CD4-positive, alpha-beta memory T cell (primary cell): ENCODE measurements at regions of chr3 and their contacts with region 1.

Region 1: GRCh38 chr3:185937689-185938463 is at the start of gene TRA2B:
- DNase-seq: peak; percentile 97 to 99 (median 99)
- H3K4me3 ChIP-seq: peak within 1 kb of the TSS; percentile 98
- H3K4me3 Mint-ChIP-seq: peak within 1 kb of the TSS; percentile 98 to 100 (median 100)
- H3K27ac ChIP-seq: peak within 1 kb of the TSS; percentile 99
- H3K27ac Mint-ChIP-seq: peak within 1 kb of the TSS; percentile 100
- H3K4me1 ChIP-seq: peaks cover 32% of the 10 kb centered on the region
- H3K4me1 Mint-ChIP-seq: peaks cover 26 to 62% (median 35%) of the 10 kb centered on the region in 4 donors
- H3K27me3 ChIP-seq: no peaks in the 10 kb centered on the region
- H3K27me3 Mint-ChIP-seq: no peaks in the 10 kb centered on the region
- total RNA-seq, gene TRA2B: 179 to 181 TPM

Region 2: GRCh38 chr3:185585859-185586685 is 351.8 kb before region 1 on chr3 and contains the start of gene SENP2:
- CTCF ChIA-PET with region 1: no interaction called
- POLR2A ChIA-PET with region 1: interaction called, 13 read pairs
- intact Hi-C with region 1: loop called (anchors 5 kb)
- DNase-seq: peak; percentile 99 to 100 (median 100)
- H3K4me3 ChIP-seq: peak within 1 kb of the TSS; percentile 57 to 78
- H3K4me3 Mint-ChIP-seq: peak within 1 kb of the TSS; percentile 83 to 94 (median 90)
- H3K27ac ChIP-seq: peak within 1 kb of the TSS; percentile 95
- H3K27ac Mint-ChIP-seq: peak within 1 kb of the TSS; percentile 93 to 98 (median 96)
- H3K4me1 ChIP-seq: peaks cover 27% of the 10 kb centered on the region
- H3K4me1 Mint-ChIP-seq: peaks cover 18 to 32% (median 24%) of the 10 kb centered on the region in 4 donors
- H3K27me3 ChIP-seq: no peaks in the 10 kb centered on the region
- H3K27me3 Mint-ChIP-seq: no peaks in the 10 kb centered on the region
- total RNA-seq, gene SENP2: 46.0 to 54.3 TPM

Region 3: GRCh38 chr3:185912929-185913901 is 24.7 kb before region 1 on chr3:
- CTCF ChIA-PET with region 1: interaction called, 22 read pairs
- POLR2A ChIA-PET with region 1: interaction called, 35 read pairs
- intact Hi-C with region 1: loop called (anchors 2 kb)
- DNase-seq: no peak
- H3K4me3 ChIP-seq: no peak overlapping the region
- H3K4me3 Mint-ChIP-seq: no peak overlapping the region
- H3K27ac ChIP-seq: no peak overlapping the region
- H3K27ac Mint-ChIP-seq: peak overlapping the region in 4 of 7 donors; percentile 17 to 82 (median 41)
- H3K4me1 ChIP-seq: no peaks in the 10 kb centered on the region
- H3K4me1 Mint-ChIP-seq: peaks cover 4 to 9% (median 7%) of the 10 kb centered on the region in 4 donors
- H3K27me3 ChIP-seq: no peaks in the 10 kb centered on the region
- H3K27me3 Mint-ChIP-seq: no peaks in the 10 kb centered on the region

Region 4: GRCh38 chr3:185995352-185995751 is 57.5 kb after region 1 on chr3:
- CTCF ChIA-PET with region 1: no interaction called
- POLR2A ChIA-PET with region 1: no interaction called
- intact Hi-C with region 1: no loop called
- DNase-seq: no peak
- H3K4me3 ChIP-seq: no peak overlapping the region
- H3K4me3 Mint-ChIP-seq: no peak overlapping the region
- H3K27ac ChIP-seq: no peak overlapping the region
- H3K27ac Mint-ChIP-seq: no peak overlapping the region
- H3K4me1 ChIP-seq: no peaks in the 10 kb centered on the region
- H3K4me1 Mint-ChIP-seq: no peaks in the 10 kb centered on the region
- H3K27me3 ChIP-seq: no peaks in the 10 kb centered on the region
- H3K27me3 Mint-ChIP-seq: peaks cover 5 to 10% of the 10 kb centered on the region in 2 donors

Region 5: DNA sequence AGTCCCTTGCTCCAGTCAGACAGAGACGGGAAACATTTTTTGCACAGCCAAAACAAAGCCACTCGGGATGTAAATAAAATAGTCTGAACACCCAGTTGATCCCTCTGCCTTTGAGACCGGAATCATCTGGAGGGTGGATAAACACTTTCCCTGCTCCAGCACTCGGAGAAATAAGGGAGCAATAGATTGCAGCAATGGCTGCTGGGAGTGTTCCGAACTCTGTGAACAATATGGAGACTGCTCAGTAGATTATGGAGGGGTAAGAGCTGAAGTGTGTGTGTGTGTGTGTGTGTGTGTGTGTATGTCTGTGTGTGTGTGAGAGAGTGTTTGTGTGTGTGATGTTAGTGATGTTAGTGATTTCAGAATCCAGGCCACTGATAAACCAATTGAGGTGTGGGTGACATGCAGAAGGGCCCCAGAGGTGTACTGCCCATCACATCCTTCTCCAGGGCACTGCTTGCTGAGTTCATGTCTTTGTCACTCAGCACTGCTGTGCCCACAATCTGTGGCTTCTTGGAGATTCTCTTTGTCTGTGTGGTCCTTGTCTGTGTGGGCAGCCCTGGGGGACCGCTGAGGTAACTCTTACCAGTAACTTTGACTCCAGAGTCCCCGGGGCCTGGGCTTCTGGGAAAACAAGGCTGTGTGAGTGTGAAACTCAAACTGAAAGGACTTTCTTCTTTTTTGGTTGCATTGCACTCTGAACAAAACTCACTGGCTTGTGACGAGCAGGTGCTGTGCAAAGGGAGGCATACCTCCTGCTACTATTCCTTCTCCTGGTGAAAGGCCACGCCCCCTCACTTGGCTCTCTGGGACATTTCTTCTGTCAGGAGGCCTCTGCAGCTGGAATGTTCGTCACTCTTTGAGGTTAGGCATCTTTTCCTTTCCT is 583.3 kb after region 1 on chr3:
- CTCF ChIA-PET with region 1: interaction called, 12 read pairs
- POLR2A ChIA-PET with region 1: interaction called, 14 read pairs
- intact Hi-C with region 1: no loop called
- DNase-seq: no peak
- H3K4me3 ChIP-seq: no peak overlapping the region
- H3K4me3 Mint-ChIP-seq: peak overlapping the region in 2 of 8 donors; percentile 29 to 53
- H3K27ac ChIP-seq: no peak overlapping the region
- H3K27ac Mint-ChIP-seq: peak overlapping the region; percentile 16 to 96 (median 57)
- H3K4me1 ChIP-seq: peaks cover 57% of the 10 kb centered on the region
- H3K4me1 Mint-ChIP-seq: peaks cover 35 to 63% (median 49%) of the 10 kb centered on the region in 4 donors
- H3K27me3 ChIP-seq: no peaks in the 10 kb centered on the region
- H3K27me3 Mint-ChIP-seq: no peaks in the 10 kb centered on the region

Region 6: GRCh38 chr3:186772701-186773424 is 835.0 kb after region 1 on chr3:
- CTCF ChIA-PET with region 1: interaction called, 3 read pairs
- POLR2A ChIA-PET with region 1: interaction called, 11 read pairs
- intact Hi-C with region 1: no loop called
- DNase-seq: peak; percentile 46 to 63 (median 49)
- H3K4me3 ChIP-seq: peak overlapping the region; percentile 37 to 72
- H3K4me3 Mint-ChIP-seq: peak overlapping the region; percentile 88 to 99 (median 96)
- H3K27ac ChIP-seq: peak overlapping the region; percentile 61
- H3K27ac Mint-ChIP-seq: peak overlapping the region; percentile 81 to 95 (median 95)
- H3K4me1 ChIP-seq: peaks cover 12% of the 10 kb centered on the region
- H3K4me1 Mint-ChIP-seq: peaks cover 0 to 18% (median 13%) of the 10 kb centered on the region in 4 donors
- H3K27me3 ChIP-seq: no peaks in the 10 kb centered on the region
- H3K27me3 Mint-ChIP-seq: no peaks in the 10 kb centered on the region

Region 7: GRCh38 chr3:187025656-187026316 is 1087.9 kb after region 1 on chr3:
- CTCF ChIA-PET with region 1: no interaction called
- POLR2A ChIA-PET with region 1: interaction called, 6 read pairs
- intact Hi-C with region 1: loop called (anchors 5 kb)
- DNase-seq: peak in 3 of 5 donors; percentile 18 to 49 (median 35)
- H3K4me3 ChIP-seq: peak overlapping the region; percentile 57 to 89
- H3K4me3 Mint-ChIP-seq: peak overlapping the region; percentile 81 to 97 (median 92)
- H3K27ac ChIP-seq: peak overlapping the region; percentile 68
- H3K27ac Mint-ChIP-seq: peak overlapping the region; percentile 86 to 98 (median 92)
- H3K4me1 ChIP-seq: peaks cover 82% of the 10 kb centered on the region
- H3K4me1 Mint-ChIP-seq: peaks cover 48 to 80% (median 62%) of the 10 kb centered on the region in 4 donors
- H3K27me3 ChIP-seq: no peaks in the 10 kb centered on the region
- H3K27me3 Mint-ChIP-seq: no peaks in the 10 kb centered on the region